PC-3 (cell line): ENCODE measurements at regions of chr20 and their contacts with region 1.

Region 1: GRCh38 chr20:49344975-49345374 is 67.1 kb upstream of the ZNFX1 start:
- DNase-seq: peak; percentile 97
- ATAC-seq: peak; percentile 81
- H3K4me3 ChIP-seq: peak overlapping the region; percentile 53
- H3K27ac ChIP-seq: peak overlapping the region; percentile 64
- H3K4me1 ChIP-seq: peaks cover 32% of the 10 kb centered on the region
- H3K27me3 ChIP-seq: no peaks in the 10 kb centered on the region
- CTCF ChIP-seq: no peak

Region 2: DNA sequence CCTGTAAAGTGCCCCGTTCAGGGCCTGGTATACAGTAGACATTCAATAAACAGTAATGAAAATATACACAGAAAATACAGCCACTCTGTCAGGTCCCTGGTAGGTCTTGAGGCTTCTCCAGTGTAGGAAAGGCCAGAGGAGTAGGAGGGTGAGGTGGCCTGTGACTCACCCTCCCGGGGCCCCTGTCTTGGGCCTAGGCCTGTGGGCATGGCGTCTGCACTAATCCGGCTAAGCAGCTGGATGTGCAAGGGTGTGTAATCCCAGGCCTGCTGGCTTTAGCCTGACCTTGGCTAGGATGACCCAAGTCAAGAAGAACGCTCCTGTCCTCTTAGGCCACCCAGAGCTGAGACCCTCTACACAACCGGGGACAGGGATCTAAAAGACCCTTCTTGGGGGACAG is 52.5 kb after region 1 on chr20:
- CTCF ChIA-PET with region 1: no interaction called
- POLR2A ChIA-PET with region 1: no interaction called
- intact Hi-C with region 1: no loop called
- DNase-seq: peak; percentile 50
- ATAC-seq: peak; percentile 82
- H3K4me3 ChIP-seq: no peak overlapping the region
- H3K27ac ChIP-seq: no peak overlapping the region
- H3K4me1 ChIP-seq: no peaks in the 10 kb centered on the region
- H3K27me3 ChIP-seq: no peaks in the 10 kb centered on the region
- CTCF ChIP-seq: no peak

Region 3: DNA sequence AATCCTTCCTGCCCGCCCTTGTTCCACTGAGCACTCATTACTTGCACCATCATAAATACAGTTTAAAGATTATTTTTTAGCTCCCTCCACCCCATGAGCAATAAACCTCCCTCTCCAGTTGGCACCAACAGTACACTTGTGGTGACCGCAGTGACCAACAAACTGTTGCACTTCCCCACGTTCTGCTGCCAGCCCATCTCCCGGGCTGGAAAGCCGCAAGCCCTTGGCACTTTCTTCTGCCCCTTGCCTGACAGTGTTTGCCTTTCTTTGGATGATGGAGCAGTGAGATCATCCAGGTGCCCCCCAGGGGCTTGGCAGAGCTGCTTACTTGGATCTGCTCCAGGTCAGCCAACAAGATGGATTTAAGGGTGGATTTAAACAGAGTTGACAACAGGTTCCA is 115.9 kb after region 1 on chr20:
- CTCF ChIA-PET with region 1: interaction called, 4 read pairs
- POLR2A ChIA-PET with region 1: interaction called, 4 read pairs
- intact Hi-C with region 1: loop called (anchors 1 kb)
- DNase-seq: peak; percentile 100
- ATAC-seq: peak; percentile 96
- H3K4me3 ChIP-seq: no peak overlapping the region
- H3K27ac ChIP-seq: no peak overlapping the region; the same call in 1 of the 2 replicates
- H3K4me1 ChIP-seq: peaks cover 13% of the 10 kb centered on the region
- H3K27me3 ChIP-seq: peaks cover 28% of the 10 kb centered on the region
- CTCF ChIP-seq: no peak